ENCODE measurements at regions of chr17 and their contacts with region 1.

Region 1: DNA sequence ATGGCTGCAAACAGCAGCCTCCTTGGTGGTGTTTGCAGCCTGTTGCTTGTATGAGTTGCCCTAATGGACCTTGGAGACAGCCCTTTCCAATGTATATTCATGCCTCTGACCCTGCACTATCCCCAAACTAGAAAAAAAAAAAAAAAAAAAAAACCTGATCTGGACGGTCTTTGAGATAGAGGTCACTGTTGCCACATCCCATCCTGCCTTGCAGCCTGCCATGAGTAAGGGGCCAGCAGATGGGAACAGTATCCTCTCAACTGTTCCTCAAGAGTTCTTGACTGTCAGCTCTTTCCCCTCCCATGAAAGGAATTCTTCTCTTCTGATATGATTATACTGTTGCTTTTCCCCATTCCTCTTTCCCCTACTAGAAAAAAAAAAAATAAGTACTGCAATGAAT is 152.4 kb downstream of the SSH2 start:
- DNase-seq: no peak
- ATAC-seq: no peak
- H3K4me3 Mint-ChIP-seq: no peak overlapping the region
- H3K27ac Mint-ChIP-seq: no peak overlapping the region
- H3K4me1 Mint-ChIP-seq: peaks cover 13% of the 10 kb centered on the region
- H3K27me3 Mint-ChIP-seq: no peaks in the 10 kb centered on the region

Region 2: GRCh38 chr17:29664743-29665480 is 112.8 kb before region 1 on chr17:
- CTCF ChIA-PET with region 1: interaction called, 21 read pairs
- POLR2A ChIA-PET with region 1: no interaction called
- DNase-seq: no peak
- ATAC-seq: no peak
- H3K4me3 Mint-ChIP-seq: no peak overlapping the region
- H3K27ac Mint-ChIP-seq: peak overlapping the region; percentile 39
- H3K4me1 Mint-ChIP-seq: peaks cover 20% of the 10 kb centered on the region
- H3K27me3 Mint-ChIP-seq: no peaks in the 10 kb centered on the region

Region 3: GRCh38 chr17:29705386-29705785 is 72.3 kb before region 1 on chr17:
- CTCF ChIA-PET with region 1: interaction called, 12 read pairs
- POLR2A ChIA-PET with region 1: no interaction called
- DNase-seq: no peak
- ATAC-seq: no peak
- H3K4me3 Mint-ChIP-seq: peak overlapping the region; percentile 54
- H3K27ac Mint-ChIP-seq: peak overlapping the region; percentile 91
- H3K4me1 Mint-ChIP-seq: peaks cover 42% of the 10 kb centered on the region
- H3K27me3 Mint-ChIP-seq: no peaks in the 10 kb centered on the region

Region 4: DNA sequence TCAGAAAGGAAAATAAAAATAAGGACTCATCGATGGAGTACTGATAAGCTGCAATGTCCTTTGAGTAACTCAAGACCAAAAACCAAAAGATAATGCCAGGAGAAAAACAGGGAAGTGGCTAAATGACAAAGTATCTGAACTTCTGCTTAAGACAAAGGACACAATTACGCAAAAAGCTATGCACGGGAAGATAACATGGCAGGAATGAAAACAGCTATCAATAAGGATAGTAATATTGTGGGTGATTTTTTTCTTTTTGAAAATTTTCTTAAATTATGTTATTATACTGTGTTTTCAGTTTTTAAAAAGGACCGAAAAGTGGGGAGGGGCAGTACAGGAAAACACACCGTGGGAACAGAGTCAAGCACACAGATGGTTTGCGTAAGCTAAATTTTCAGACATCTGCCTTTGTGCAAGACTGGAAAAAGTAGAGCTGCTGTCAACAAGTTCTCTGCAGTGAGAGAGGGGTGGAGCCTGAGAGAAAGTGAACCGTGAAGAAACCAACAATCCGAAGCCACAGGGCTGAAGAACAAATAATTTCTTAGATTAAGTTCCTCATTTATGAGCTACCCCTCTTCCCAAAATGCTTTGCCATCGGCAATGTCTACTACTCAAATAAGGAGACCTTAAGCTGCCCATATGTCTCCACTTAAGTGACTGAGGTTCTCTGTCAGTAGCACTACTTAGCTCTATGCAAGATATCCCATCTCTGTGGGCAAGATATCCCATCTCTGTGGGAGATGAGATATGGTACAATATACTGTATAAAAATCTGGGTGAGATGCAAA is 55.1 kb before region 1 on chr17:
- CTCF ChIA-PET with region 1: interaction called, 12 read pairs
- POLR2A ChIA-PET with region 1: no interaction called
- DNase-seq: peak; percentile 41
- ATAC-seq: peak; percentile 73
- H3K4me3 Mint-ChIP-seq: peak overlapping the region; percentile 3
- H3K27ac Mint-ChIP-seq: peak overlapping the region; percentile 20
- H3K4me1 Mint-ChIP-seq: peaks cover 55% of the 10 kb centered on the region
- H3K27me3 Mint-ChIP-seq: no peaks in the 10 kb centered on the region

Region 5: GRCh38 chr17:29760761-29761696 is 16.6 kb before region 1 on chr17:
- CTCF ChIA-PET with region 1: interaction called, 19 read pairs
- POLR2A ChIA-PET with region 1: interaction called, 3 read pairs
- DNase-seq: peak; percentile 94
- ATAC-seq: peak; percentile 92
- H3K4me3 Mint-ChIP-seq: peak overlapping the region; percentile 87
- H3K27ac Mint-ChIP-seq: peak overlapping the region; percentile 99
- H3K4me1 Mint-ChIP-seq: peaks cover 44% of the 10 kb centered on the region
- H3K27me3 Mint-ChIP-seq: no peaks in the 10 kb centered on the region

Region 6: DNA sequence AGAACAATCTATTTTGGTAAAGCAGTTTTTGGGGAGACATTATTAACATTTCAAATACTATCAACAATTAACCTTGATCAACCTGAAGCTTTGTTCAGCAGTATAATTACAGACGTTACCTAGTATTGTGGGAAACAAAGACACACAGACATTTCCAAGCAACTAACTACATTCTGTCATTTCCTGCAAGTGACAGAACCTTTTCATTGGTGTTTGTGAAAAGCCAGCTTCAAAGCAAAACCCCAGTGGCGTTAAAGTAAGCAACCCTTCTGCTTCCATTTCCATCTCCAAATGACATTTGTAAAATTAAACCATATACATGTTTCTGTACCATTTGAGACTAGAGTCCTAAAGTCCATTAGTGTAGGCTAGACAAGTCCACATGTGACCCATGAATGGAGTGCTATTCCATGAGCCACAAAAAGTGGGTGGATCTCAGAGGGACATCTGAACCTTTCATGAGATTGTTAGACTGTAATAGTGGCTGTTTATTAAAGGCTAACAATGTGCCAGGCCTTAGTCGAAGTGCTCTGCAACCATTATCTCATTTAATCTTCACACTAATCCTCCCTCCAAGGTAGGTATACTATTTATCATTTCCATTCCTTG is 51.1 kb after region 1 on chr17:
- CTCF ChIA-PET with region 1: no interaction called
- POLR2A ChIA-PET with region 1: no interaction called
- DNase-seq: no peak
- ATAC-seq: no peak
- H3K4me3 Mint-ChIP-seq: no peak overlapping the region
- H3K27ac Mint-ChIP-seq: no peak overlapping the region
- H3K4me1 Mint-ChIP-seq: peaks cover 20% of the 10 kb centered on the region
- H3K27me3 Mint-ChIP-seq: no peaks in the 10 kb centered on the region